Calu3 (cell line): ENCODE measurements at regions of chrX and their contacts with region 1.

Region 1: GRCh38 chrX:45322382-45322781 is 121.7 kb upstream of the DIPK2B start:
- DNase-seq: peak; percentile 45
- H3K4me3 Mint-ChIP-seq: no peak overlapping the region
- H3K27ac Mint-ChIP-seq: no peak overlapping the region
- H3K4me1 Mint-ChIP-seq: peaks cover 15% of the 10 kb centered on the region
- H3K27me3 Mint-ChIP-seq: no peaks in the 10 kb centered on the region
- CTCF ChIP-seq: peak; percentile 29

Region 2: DNA sequence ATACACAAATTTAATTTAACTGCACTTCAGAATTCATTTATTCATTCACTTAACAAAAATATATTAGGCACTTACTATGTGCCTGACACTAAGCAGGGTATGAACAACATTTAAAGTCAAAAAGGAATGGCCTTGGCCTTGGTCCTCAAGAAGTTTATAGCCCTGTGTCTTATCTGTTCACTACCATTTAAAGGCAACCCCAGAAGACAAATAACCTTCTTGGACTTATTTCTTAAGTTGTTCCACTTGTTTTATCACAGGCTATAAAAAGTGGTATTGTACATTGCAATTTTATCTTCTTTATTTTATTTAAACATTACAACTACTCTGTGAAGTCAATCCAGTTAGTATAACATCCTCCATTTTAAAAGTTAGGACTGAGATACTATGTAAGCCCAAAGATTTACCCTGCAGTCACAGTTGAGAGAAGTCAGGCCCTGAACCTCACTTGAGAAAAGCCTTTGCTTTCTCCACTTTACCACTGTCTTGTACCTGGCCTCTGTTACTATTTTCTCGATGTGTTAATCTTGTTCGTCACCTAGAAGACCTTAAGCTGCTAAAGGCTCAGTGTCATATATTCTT is 183.9 kb after region 1 on chrX:
- CTCF ChIA-PET with region 1: interaction called, 3 read pairs
- intact Hi-C with region 1: loop called (anchors 2 kb)
- DNase-seq: no peak
- H3K4me3 Mint-ChIP-seq: no peak overlapping the region
- H3K27ac Mint-ChIP-seq: peak overlapping the region; percentile 56
- H3K4me1 Mint-ChIP-seq: peaks cover 41% of the 10 kb centered on the region
- H3K27me3 Mint-ChIP-seq: no peaks in the 10 kb centered on the region
- CTCF ChIP-seq: no peak

Region 3: DNA sequence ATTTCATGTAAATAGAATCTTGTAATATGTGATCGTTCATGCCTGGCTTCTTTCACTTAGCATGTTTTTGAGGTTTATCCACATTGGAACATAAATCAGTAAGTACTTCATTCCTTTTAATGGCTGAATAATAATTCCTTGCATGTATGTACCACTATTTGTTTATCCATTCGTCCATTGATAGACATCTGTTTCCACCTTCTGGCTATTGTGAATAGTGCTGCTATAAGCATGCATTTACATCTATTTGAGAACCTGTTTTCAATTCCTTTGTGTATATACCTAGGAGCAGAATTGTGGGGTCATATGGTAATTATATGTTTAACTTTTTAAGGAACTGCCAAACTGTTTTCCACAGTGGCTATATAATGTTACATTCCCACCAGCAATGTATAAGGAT is 235.0 kb after region 1 on chrX:
- CTCF ChIA-PET with region 1: no interaction called
- intact Hi-C with region 1: loop called (anchors 2 kb)
- DNase-seq: no peak
- H3K4me3 Mint-ChIP-seq: no peak overlapping the region
- H3K27ac Mint-ChIP-seq: no peak overlapping the region
- H3K4me1 Mint-ChIP-seq: no peaks in the 10 kb centered on the region
- H3K27me3 Mint-ChIP-seq: no peaks in the 10 kb centered on the region
- CTCF ChIP-seq: no peak

Region 4: DNA sequence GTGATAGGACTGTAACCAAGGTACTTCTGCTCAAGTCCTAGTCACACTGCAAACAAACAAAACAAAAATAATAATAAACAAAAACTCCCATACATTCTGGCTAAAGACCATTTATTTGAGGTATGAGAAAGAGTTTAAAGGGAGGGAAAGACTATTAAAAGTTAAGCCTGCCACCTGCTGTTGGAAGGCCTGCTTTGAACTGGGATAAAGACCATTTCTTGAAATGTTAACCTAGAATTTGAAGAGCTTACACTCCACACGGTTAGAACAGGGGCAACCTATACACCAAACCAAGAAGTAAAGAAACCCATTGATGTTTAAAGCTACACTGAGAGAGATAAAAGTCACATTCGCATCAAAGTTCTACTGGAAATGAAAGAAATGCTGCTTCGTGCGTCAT is 427.0 kb after region 1 on chrX:
- CTCF ChIA-PET with region 1: interaction called, 3 read pairs
- intact Hi-C with region 1: loop called (anchors 2 kb)
- DNase-seq: no peak
- H3K4me3 Mint-ChIP-seq: peak overlapping the region; percentile 29
- H3K27ac Mint-ChIP-seq: peak overlapping the region; percentile 54
- H3K4me1 Mint-ChIP-seq: peaks cover 39% of the 10 kb centered on the region
- H3K27me3 Mint-ChIP-seq: no peaks in the 10 kb centered on the region
- CTCF ChIP-seq: no peak

Region 5: GRCh38 chrX:46408553-46409407 is 1086.4 kb after region 1 on chrX:
- CTCF ChIA-PET with region 1: interaction called, 9 read pairs
- intact Hi-C with region 1: loop called (anchors 10 kb)
- DNase-seq: peak; percentile 75
- H3K4me3 Mint-ChIP-seq: no peak overlapping the region
- H3K27ac Mint-ChIP-seq: peak overlapping the region; percentile 18
- H3K4me1 Mint-ChIP-seq: peaks cover 13% of the 10 kb centered on the region
- H3K27me3 Mint-ChIP-seq: no peaks in the 10 kb centered on the region
- CTCF ChIP-seq: peak; percentile 64